Activated naive CD4-positive, alpha-beta T cell treated with anti-CD3 and anti-CD28 coated beads for 36 hours (primary cell): ENCODE measurements at regions of chr4 and their contacts with region 1.

Region 1: GRCh38 chr4:2963175-2963965 is at the starts of genes GRK4 and NOP14:
- DNase-seq: peak; percentile 98
- H3K4me3 Mint-ChIP-seq: peak within 1 kb of the TSS; percentile 80
- H3K27ac Mint-ChIP-seq: peak within 1 kb of the TSS; percentile 85
- H3K4me1 Mint-ChIP-seq: peaks cover 29% of the 10 kb centered on the region
- H3K27me3 Mint-ChIP-seq: no peaks in the 10 kb centered on the region
- total RNA-seq, gene GRK4: 1.3 to 2.1 TPM
- total RNA-seq, gene NOP14: 48.3 to 55.1 TPM

Region 2: DNA sequence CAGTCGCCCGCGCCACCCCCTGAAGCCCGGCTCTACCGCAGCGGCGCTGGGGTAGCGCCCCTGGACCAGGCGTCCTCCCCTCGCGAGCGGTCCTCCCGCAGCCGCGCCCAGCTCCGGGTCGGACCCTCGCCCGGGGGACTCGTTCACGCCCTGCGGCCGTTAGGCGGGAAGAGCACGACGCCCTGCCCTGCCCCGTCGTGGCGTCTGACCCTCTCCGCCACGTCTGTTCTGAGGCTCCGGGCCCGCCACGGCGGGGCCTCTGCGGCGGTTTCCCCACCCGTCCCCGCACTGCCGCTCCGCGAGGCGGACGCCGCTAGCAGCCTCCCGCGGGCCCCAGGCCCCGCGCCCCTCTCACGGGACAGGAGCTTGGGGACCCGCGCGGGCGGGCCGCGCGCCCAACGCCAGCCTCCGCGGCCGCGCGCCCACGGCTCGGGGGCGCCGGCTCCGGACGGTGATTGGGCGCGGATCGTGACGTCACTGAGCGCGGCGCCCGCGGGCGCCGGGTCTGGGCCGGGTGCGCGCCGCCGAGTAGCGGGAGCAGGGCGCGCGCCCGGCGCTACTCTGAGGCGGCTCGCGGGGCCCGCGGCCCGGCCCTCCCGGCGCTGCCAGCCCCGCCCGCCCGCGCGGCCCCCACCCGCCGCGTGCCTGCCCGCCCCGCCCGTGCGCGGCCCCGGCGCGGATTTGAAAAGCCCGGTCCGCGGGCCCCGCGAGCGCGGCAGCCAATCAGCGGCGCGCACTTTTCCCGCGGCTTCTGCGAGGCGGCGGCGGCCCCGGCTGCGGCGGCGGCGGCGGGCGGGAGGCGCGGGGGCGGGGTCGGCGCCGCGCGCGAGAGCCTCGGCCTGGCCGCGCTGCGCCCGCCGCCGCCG is 1092.6 kb before region 1 on chr4 and contains the start of gene NSD2:
- CTCF ChIA-PET with region 1: no interaction called
- intact Hi-C with region 1: loop called (anchors 10 kb)
- DNase-seq: peak; percentile 90
- H3K4me3 Mint-ChIP-seq: peak within 1 kb of the TSS; percentile 92
- H3K27ac Mint-ChIP-seq: peak within 1 kb of the TSS; percentile 96
- H3K4me1 Mint-ChIP-seq: peaks cover 35% of the 10 kb centered on the region
- H3K27me3 Mint-ChIP-seq: no peaks in the 10 kb centered on the region
- total RNA-seq, gene NSD2: 246 to 250 TPM

Region 3: DNA sequence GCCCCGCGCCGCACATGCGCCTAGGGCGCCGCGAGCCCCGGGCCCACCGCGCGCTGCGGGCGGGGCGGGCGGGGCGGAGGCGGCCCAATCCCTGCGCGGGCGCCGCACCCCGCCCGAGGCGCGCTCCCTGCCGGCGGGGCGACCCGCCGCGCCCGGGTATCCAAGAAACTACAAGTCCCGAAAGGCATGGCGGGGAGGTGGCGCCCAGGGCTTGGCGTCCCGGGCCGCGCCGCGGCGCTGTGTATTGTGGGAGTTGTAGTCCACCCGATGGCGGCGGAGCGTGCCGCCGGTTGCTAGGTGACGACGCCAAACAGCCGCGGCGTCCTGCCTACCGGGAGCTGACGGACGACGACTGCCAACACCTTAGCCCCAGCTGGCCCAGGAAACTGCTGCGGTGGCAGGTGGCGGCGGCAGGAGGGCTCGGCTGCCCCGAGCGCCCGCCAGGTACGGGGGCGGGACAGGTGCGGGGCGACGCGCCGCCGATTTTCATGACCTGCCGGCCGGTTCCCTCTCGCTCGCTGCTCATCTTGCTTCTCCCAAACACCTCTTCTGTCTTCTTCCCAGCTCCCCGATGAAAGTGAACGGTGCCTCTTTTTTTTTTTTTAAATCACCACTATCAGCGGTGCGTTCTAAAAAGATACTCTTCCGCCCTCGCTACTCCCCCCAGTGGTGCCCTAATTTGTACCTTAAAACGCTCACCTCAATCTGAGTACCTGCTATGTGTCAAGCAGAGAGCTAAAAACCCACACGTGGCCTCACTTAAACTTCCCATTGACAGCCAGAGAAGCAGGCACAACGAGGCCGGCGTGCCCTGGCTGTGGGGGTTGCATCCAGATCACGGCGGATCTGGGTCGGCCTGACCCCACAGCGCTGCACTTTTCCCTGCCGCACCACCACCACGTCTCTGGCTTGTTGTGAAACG is 544.5 kb before region 1 on chr4 and contains the start of gene CFAP99:
- CTCF ChIA-PET with region 1: no interaction called
- intact Hi-C with region 1: loop called (anchors 1 kb)
- DNase-seq: peak; percentile 97
- H3K4me3 Mint-ChIP-seq: peak within 1 kb of the TSS; percentile 81
- H3K27ac Mint-ChIP-seq: no peak within 1 kb of the TSS
- H3K4me1 Mint-ChIP-seq: peaks cover 38% of the 10 kb centered on the region
- H3K27me3 Mint-ChIP-seq: peaks cover 37% of the 10 kb centered on the region
- total RNA-seq, gene CFAP99: not detected

Region 4: DNA sequence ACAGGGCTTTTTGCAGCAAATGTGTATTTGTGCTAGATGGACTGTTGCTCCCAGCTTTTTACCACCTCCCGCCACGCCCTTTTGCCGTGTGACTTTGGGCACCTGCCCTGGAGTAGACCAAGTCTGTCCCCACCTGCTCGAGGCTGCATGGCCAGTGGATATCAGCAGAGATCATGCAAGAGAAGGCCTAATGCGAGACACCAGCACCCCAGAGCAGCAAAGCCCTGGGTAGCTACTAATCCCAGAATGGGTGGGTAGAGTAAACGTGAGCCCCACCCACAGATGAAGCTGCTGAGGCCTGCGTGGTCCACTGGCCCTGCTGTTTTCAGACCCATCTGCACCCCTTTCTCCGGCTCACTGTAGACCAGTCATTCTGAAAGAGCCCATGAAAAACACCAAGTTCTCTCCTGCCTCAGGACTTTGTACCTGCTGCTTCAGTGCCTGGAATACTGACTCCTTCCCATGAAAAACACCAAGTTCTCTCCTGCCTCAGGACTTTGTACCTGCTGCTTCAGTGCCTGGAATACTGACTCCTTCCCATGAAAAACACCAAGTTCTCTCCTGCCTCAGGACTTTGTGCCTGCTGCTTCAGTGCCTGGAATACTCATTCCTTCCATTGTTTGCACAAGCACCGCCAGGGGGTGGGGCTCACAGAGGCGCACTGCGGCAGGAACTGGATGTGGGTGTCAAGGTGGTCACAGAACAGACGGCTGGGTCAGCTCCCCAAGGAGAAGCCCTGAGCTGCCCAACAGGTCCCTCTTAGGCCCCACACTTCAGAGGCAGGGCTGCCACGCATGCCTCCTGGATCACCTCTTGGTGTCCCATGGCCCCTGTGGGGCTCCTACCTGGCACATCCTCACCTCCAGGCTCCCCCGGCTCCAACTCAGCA is 202.1 kb before region 1 on chr4:
- CTCF ChIA-PET with region 1: interaction called, 11 read pairs
- intact Hi-C with region 1: no loop called
- DNase-seq: no peak
- H3K4me3 Mint-ChIP-seq: no peak overlapping the region
- H3K27ac Mint-ChIP-seq: no peak overlapping the region
- H3K4me1 Mint-ChIP-seq: peaks cover 5% of the 10 kb centered on the region
- H3K27me3 Mint-ChIP-seq: no peaks in the 10 kb centered on the region

Region 5: GRCh38 chr4:2977211-2978088 is 14.1 kb after region 1 on chr4:
- CTCF ChIA-PET with region 1: interaction called, 55 read pairs
- intact Hi-C with region 1: no loop called
- DNase-seq: no peak
- H3K4me3 Mint-ChIP-seq: no peak overlapping the region
- H3K27ac Mint-ChIP-seq: no peak overlapping the region
- H3K4me1 Mint-ChIP-seq: no peaks in the 10 kb centered on the region
- H3K27me3 Mint-ChIP-seq: no peaks in the 10 kb centered on the region

Region 6: GRCh38 chr4:3085948-3086655 is 122.7 kb after region 1 on chr4:
- CTCF ChIA-PET with region 1: no interaction called
- intact Hi-C with region 1: loop called (anchors 5 kb)
- DNase-seq: no peak
- H3K4me3 Mint-ChIP-seq: peak overlapping the region; percentile 23
- H3K27ac Mint-ChIP-seq: peak overlapping the region; percentile 86
- H3K4me1 Mint-ChIP-seq: peaks cover 69% of the 10 kb centered on the region
- H3K27me3 Mint-ChIP-seq: no peaks in the 10 kb centered on the region